Tibial artery (tissue), 4 donors: ENCODE measurements at regions of chr2 and their contacts with region 1.

Region 1: DNA sequence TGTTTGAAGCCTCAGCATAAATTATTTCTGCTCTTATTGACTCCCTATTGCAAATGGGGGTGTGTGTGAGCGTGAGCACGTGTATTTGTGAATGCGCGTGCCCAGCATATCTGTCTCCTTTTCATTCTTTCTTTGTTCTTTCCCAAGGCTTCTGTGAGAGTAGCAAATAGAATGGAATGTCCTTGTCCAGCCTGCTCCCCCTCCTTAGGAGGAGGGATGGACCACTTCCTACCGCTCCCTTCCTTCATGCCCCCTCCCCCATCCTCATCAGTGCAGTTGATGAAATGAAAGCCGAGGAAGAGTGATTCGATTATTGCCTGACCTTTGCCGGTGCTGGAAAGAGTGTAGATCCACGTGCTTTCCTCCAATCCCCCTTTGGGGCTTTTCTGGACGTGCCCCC is 102.0 kb downstream of the CPO start:
- DNase-seq: no peak
- H3K4me3 ChIP-seq: peak overlapping the region; percentile 35 to 47
- H3K27ac ChIP-seq: peak overlapping the region; percentile 55 to 70
- H3K4me1 ChIP-seq: peaks cover 0 to 27% (median 23%) of the 10 kb centered on the region in 4 donors
- H3K27me3 ChIP-seq: no peaks in the 10 kb centered on the region
- CTCF ChIP-seq: no peak

Region 2: DNA sequence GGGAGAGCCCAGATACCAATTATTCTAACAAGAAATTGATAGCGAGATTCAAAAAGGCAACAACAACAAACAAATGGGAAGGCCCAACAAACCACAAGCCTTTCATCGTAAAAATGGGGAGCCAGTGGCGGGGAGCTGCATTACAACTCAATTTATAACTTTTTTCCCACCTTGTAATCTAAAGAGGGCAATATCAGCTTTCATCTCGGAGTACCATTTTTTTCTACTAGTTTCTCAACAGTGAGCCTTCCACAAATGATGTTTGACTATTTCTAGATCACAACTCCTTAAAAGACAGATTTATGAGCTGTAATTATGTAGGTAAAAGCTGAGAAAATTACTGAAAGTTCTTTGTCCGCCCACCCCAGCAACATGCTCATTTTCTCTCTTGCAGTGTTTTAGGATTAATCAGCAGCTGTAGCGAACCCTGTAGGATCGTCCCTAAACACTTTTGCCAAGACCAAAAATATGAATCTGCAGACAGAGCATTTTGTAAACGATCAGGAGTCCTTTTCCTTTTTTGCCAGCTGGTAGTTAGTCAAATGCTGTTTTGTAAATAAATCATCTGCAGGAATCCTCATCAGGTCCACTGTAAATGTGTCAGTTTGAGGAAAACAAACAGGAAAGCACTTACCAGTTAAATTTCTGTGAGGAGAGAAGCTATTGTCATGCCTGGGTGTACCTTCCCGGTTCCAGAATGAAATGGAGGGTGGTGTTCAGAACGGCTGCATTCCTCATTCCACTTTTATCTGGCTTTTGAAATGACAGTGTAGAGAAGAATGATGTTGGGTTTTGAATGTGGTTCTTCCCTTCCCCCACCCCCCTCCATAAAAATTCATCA is 828.4 kb before region 1 on chr2:
- intact Hi-C with region 1: no loop called
- DNase-seq: no peak
- H3K4me3 ChIP-seq: no peak overlapping the region
- H3K27ac ChIP-seq: no peak overlapping the region
- H3K4me1 ChIP-seq: peaks cover 0 to 8% (median 0%) of the 10 kb centered on the region in 4 donors
- H3K27me3 ChIP-seq: no peaks in the 10 kb centered on the region
- CTCF ChIP-seq: no peak

Region 3: GRCh38 chr2:207166039-207166348 is 124.7 kb after region 1 on chr2:
- intact Hi-C with region 1: loop called (anchors 5 kb)
- DNase-seq: peak; percentile 99 to 100
- H3K4me3 ChIP-seq: peak overlapping the region; percentile 90 to 98
- H3K27ac ChIP-seq: peak overlapping the region; percentile 100
- H3K4me1 ChIP-seq: peaks cover 0 to 33% (median 17%) of the 10 kb centered on the region in 4 donors
- H3K27me3 ChIP-seq: no peaks in the 10 kb centered on the region
- CTCF ChIP-seq: no peak